Activated CD8-positive, alpha-beta T cell treated with anti-CD3 and anti-CD28 coated beads, Interleukin-2, amount 10 ng/mL, durations not matched to agents 7 days and 5 days (primary cell): ENCODE measurements at regions of chr3 and their contacts with region 1.

Region 1: DNA sequence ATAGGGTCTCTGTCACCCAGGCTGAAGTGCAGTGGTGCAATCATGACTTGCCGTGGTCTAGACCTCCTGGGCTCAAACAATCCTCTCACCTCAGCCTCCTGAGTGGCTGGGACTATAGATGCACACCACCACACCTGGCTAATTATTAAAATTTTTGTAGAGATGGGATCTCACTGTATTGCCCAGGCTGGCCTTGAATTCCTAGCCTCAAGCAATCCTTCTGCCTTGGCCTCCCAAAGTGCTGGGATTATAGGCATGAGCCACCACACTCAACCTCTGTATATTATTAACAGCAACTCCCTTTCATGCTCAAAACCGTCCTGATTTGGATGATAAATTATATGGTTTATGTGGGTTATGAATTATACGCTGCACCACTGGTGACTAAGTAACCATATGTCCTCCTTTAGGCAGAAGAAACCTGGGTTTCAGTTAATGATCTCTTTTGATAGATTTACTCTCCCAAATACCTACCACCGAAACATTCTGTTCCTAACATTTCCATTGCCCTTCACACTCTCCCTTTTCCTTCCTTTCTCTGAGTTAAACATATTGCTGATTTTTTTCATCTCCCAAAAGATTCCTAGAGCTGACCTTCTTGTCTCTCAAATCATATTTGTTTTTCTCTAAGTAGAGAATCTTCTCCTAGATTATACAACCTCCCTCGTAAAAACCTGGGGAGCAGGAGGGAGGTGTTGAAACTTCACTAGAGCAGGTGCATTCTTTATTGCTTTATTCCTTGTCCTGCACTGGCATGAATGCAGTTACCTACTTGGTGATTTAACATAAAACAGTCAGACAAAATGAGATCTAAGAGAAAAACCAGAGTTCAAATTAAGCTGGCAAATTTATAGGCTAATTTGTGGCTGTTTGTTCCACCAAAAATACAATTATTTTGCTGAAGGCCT is 32.9 kb downstream of the PCYT1A start:
- DNase-seq: no peak
- ATAC-seq: no peak
- H3K4me3 Mint-ChIP-seq: no peak overlapping the region
- H3K27ac Mint-ChIP-seq: no peak overlapping the region
- H3K4me1 Mint-ChIP-seq: peaks cover 4% of the 10 kb centered on the region
- H3K27me3 Mint-ChIP-seq: no peaks in the 10 kb centered on the region

Region 2: DNA sequence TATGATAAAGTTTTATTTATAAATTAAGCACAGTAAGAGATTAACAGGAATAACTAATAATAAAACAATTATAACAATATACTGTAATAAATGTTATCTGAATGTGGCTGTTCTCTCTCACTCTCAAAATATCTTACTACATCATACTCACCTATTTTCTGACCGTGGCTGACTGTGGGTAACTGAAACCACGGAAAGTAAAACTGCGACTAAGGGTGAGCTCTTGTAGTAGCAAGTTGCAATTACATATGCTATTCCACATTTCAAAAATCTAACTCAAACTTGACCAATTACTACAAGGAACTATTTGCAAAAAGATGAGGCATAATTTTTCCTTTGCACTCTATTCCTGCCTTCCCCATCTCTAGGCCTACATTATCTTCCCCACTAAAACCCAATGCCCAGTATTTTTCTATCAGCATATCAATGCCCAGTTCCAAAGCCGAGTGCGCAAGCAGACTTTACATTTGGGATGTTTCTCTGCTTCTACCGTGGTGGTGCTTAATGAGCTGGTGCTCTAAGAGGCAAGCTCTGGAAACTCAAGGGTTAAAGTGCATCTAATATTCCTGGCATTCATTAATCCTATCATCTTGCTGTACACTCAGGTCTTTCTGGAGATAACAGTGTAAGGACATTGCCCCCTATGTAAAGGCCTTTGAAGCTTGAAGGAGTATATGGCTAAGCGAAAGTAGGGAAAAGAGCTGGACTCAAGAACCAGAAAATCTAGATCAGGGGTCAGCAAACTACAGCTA is 26.2 kb after region 1 on chr3:
- CTCF ChIA-PET with region 1: interaction called, 10 read pairs
- POLR2A ChIA-PET with region 1: no interaction called
- DNase-seq: peak; percentile 70
- ATAC-seq: peak; percentile 66
- H3K4me3 Mint-ChIP-seq: peak overlapping the region; percentile 1
- H3K27ac Mint-ChIP-seq: peak overlapping the region; percentile 16
- H3K4me1 Mint-ChIP-seq: peaks cover 64% of the 10 kb centered on the region
- H3K27me3 Mint-ChIP-seq: no peaks in the 10 kb centered on the region

Region 3: DNA sequence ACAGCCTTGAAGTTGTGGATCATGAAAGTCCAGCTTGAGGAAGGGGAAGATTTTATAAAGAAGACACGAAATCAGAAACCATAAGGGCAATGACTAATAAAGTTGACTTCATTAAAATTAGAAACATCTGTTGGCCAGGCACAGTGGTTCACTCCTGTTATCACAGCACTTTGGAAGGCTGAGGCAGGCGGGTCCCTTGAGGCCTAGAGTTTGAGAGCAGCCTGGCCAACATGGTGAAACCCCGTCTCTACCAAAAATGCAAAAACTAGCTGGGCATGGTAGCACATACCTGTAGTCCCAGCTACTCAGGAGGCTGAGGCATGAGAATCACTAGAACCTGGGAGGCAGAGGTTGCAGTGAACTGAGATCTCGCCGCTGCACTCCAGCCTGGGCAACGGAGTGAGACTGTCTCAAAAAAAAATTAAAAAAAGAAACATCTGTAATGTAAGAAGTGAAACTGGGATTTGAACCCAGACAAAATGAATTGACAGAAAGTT is 185.5 kb after region 1 on chr3:
- CTCF ChIA-PET with region 1: no interaction called
- POLR2A ChIA-PET with region 1: no interaction called
- DNase-seq: no peak
- ATAC-seq: no peak
- H3K4me3 Mint-ChIP-seq: no peak overlapping the region
- H3K27ac Mint-ChIP-seq: no peak overlapping the region
- H3K4me1 Mint-ChIP-seq: peaks cover 6% of the 10 kb centered on the region
- H3K27me3 Mint-ChIP-seq: peaks cover 2% of the 10 kb centered on the region

Region 4: DNA sequence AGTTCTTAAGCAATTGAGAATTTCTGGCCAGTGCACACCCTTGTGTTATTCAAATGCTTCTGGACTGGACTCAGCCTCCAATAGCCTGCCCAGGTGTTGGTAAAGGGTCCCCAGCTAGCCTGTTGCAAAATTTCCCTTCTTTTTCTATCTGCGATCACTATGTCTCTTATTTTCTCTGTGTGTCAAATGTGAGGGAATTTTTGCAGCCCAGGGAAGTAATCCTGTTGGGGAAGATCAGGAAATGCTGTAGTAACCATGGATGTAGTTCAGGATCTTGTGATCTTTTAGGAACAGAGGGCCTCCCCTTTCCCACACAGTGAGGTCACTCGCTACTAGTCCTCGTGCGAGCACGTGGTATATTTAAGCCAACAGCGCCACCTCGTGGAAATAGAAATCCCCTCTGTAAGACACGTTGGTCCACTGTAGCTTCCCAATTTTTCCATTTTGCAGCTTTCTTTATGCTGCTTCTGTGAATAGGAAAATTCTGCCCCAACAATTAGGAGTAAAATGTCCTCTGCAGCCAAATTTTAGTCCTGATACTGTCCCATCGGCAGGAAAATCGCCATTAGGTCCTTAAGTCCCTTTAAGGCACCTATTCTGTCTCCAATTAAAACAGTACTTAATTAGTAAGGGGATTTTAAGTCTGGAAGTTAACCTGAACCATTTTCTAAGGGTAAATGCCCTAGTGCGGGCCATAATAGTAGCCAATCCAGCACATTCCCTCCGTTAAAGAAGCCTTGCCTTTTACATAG is 264.5 kb after region 1 on chr3:
- CTCF ChIA-PET with region 1: interaction called, 22 read pairs
- POLR2A ChIA-PET with region 1: no interaction called
- DNase-seq: peak; percentile 75
- ATAC-seq: peak; percentile 55
- H3K4me3 Mint-ChIP-seq: no peak overlapping the region
- H3K27ac Mint-ChIP-seq: no peak overlapping the region
- H3K4me1 Mint-ChIP-seq: no peaks in the 10 kb centered on the region
- H3K27me3 Mint-ChIP-seq: peaks cover 2% of the 10 kb centered on the region